Endothelial cell of umbilical vein (primary cell): ENCODE measurements at regions of chr16 and their contacts with region 1.

Region 1: DNA sequence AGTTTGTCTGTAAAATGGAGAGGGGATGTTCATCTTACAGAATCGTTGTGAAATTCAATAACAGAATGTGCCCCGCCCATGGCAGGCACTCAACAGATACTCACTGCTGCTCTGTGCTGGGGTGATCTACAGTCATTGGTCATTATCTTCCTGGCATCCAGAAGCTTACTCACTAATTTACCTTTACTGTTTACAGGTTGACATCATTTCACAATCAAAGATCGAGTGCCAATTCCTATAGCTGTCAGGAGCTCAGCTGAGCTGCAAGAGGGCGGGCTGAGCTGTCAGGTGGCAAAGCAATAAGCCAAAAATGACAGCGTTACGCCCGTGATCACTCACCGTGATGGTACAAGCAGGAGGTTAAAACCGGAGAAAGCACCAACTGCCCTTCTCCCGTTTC is 51.2 kb downstream of the LITAF start:
- DNase-seq: no peak
- H3K4me3 ChIP-seq: no peak overlapping the region
- H3K27ac ChIP-seq: no peak overlapping the region
- H3K4me1 ChIP-seq: peaks cover 3% of the 10 kb centered on the region
- H3K27me3 ChIP-seq: no peaks in the 10 kb centered on the region
- CTCF ChIP-seq: no peak
- POLR2A ChIP-seq: no peak

Region 2: DNA sequence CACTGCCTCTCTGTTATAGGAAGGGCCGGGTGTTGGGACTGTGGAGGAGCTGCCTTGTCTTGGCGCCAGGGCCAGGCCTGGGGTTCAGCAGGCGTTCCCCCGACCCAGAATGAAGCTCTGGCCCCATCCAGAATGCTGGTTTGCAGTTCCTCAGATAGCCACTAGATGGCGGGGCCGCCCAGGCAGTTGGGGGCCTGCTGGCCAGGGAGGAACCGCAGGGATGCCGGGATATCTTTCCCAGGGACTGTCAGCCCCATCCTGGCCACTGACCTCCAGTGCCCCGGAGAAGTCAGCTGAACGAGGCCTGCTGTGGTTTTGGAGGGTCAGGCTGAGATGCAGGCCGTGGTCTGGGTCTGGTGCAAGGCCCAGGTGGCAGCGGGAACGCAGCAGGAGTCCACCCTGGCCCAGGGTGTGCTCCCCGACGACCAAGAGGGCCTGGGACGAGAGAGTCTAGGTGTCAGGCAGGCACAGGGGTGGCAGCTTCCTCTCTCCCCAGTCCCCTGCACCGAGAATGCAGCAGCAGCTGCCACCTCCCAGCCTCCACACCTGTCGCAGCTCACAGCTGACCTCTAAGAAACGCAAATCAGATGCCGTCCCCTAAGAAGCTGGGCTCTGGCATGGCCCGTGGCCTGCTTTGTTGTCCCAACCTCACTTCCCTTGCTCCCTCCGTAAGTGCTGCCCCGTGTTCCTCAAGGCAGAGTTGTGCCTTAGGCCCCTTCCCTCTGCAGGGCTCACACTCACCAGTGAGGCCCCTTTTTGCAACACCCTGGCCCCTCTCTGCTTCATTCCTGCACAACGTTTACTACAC is 139.0 kb before region 1 on chr16:
- CTCF ChIA-PET with region 1: interaction called, 22 read pairs
- POLR2A ChIA-PET with region 1: no interaction called
- dilution Hi-C with region 1: no loop called
- intact Hi-C with region 1: no loop called
- DNase-seq: peak; percentile 39
- H3K4me3 ChIP-seq: no peak overlapping the region
- H3K27ac ChIP-seq: no peak overlapping the region
- H3K4me1 ChIP-seq: no peaks in the 10 kb centered on the region
- H3K27me3 ChIP-seq: no peaks in the 10 kb centered on the region
- CTCF ChIP-seq: peak; percentile 95 to 96
- POLR2A ChIP-seq: no peak

Region 3: DNA sequence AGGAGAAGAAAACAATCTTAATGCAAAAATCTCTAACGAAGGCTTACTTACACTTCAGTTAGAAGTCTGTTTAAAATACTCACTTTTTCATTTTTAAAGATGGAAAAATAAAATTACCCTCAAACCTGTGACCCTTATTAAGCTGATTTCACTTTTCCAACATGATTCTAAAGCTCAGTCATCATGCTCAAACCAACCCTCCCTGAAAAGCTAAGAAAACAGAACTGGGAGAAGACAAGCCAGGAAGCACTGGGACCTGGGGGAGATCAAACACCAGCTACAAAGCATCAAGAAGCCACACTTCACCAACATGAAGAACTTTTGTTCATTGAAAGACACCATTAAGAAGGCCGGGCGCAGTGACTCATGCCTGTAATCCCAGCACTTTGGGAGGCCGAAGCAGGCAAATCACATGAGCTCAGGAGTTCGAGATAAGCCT is 37.6 kb before region 1 on chr16:
- CTCF ChIA-PET with region 1: interaction called, 19 read pairs
- POLR2A ChIA-PET with region 1: no interaction called
- dilution Hi-C with region 1: no loop called
- intact Hi-C with region 1: no loop called
- DNase-seq: peak; percentile 44
- H3K4me3 ChIP-seq: no peak overlapping the region
- H3K27ac ChIP-seq: peak overlapping the region; percentile 52
- H3K4me1 ChIP-seq: peaks cover 35% of the 10 kb centered on the region
- H3K27me3 ChIP-seq: no peaks in the 10 kb centered on the region
- CTCF ChIP-seq: no peak
- POLR2A ChIP-seq: no peak

Region 4: GRCh38 chr16:11515540-11516430 is 19.7 kb before region 1 on chr16:
- CTCF ChIA-PET with region 1: interaction called, 31 read pairs
- POLR2A ChIA-PET with region 1: no interaction called
- dilution Hi-C with region 1: no loop called
- intact Hi-C with region 1: no loop called
- DNase-seq: no peak
- H3K4me3 ChIP-seq: no peak overlapping the region
- H3K27ac ChIP-seq: no peak overlapping the region
- H3K4me1 ChIP-seq: no peaks in the 10 kb centered on the region
- H3K27me3 ChIP-seq: no peaks in the 10 kb centered on the region
- CTCF ChIP-seq: no peak
- POLR2A ChIP-seq: no peak

Region 5: GRCh38 chr16:11667824-11668622 is 132.6 kb after region 1 on chr16 and contains the start of gene SNN:
- CTCF ChIA-PET with region 1: interaction called, 7 read pairs
- POLR2A ChIA-PET with region 1: no interaction called
- dilution Hi-C with region 1: no loop called
- intact Hi-C with region 1: loop called (anchors 1 kb)
- DNase-seq: peak; percentile 79
- H3K4me3 ChIP-seq: peak within 1 kb of the TSS; percentile 33 to 72 (median 42)
- H3K27ac ChIP-seq: no peak within 1 kb of the TSS
- H3K4me1 ChIP-seq: peaks cover 13% of the 10 kb centered on the region
- H3K27me3 ChIP-seq: no peaks in the 10 kb centered on the region
- CTCF ChIP-seq: no peak
- POLR2A ChIP-seq: peak; percentile 41
- total RNA-seq, gene SNN: 20.7 and 24.1 TPM in 2 replicates

Region 6: GRCh38 chr16:11816103-11816502 is 280.6 kb after region 1 on chr16:
- CTCF ChIA-PET with region 1: interaction called, 5 read pairs
- POLR2A ChIA-PET with region 1: no interaction called
- dilution Hi-C with region 1: no loop called
- intact Hi-C with region 1: loop called (anchors 1 kb)
- DNase-seq: no peak
- H3K4me3 ChIP-seq: no peak overlapping the region
- H3K27ac ChIP-seq: no peak overlapping the region
- H3K4me1 ChIP-seq: no peaks in the 10 kb centered on the region
- H3K27me3 ChIP-seq: no peaks in the 10 kb centered on the region
- CTCF ChIP-seq: no peak
- POLR2A ChIP-seq: no peak